Right ventricle myocardium inferior (tissue), 1 donor: ENCODE measurements at regions of chr9 and their contacts with region 1.

Region 1: GRCh38 chr9:20622330-20623020 is at the start of gene MLLT3:
- DNase-seq: peak; percentile 98
- ATAC-seq: peak; percentile 97
- total RNA-seq, gene MLLT3: 14.6 TPM

Region 2: GRCh38 chr9:19925817-19926503 is 696.5 kb before region 1 on chr9:
- intact Hi-C with region 1: loop called (anchors 5 kb)
- DNase-seq: no peak
- ATAC-seq: peak; percentile 93

Region 3: GRCh38 chr9:20479419-20480155 is 142.9 kb before region 1 on chr9:
- intact Hi-C with region 1: loop called (anchors 5 kb)
- DNase-seq: no peak
- ATAC-seq: no peak

Region 4: GRCh38 chr9:20683351-20684034 is 61.0 kb after region 1 on chr9:
- intact Hi-C with region 1: loop called (anchors 1 kb)
- DNase-seq: peak; percentile 78
- ATAC-seq: peak; percentile 47

Region 5: DNA sequence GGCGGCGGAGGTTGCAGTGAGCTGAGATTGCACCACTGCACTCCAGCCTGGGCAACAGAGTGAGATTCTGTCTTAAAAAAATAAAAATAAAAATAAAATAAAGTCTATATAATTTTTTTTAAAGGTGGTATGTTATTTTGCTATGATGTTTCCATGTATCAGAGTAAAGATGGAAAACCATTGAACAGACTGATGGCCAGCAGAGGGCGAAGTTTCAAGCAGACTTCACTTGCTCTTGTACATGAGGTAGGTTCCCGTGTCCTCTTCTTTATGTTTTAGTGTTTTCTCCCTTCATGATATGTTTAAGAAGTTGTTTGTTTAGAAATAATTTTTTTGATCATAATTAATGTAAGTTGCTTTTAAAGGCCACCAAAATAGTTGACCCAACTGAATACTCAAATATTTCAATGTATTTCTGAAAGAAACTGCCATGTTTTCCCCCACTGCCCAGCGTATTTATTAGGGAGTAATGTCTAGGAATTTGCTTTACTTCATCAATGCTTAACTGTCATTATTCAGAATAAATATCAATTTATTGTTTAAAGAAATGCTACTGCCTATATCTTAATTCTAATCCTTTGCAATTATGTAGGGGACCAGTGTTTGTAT is 262.6 kb after region 1 on chr9:
- intact Hi-C with region 1: loop called (anchors 5 kb)
- DNase-seq: no peak
- ATAC-seq: no peak

Region 6: GRCh38 chr9:21016701-21017491 is 394.4 kb after region 1 on chr9:
- intact Hi-C with region 1: no loop called
- DNase-seq: no peak
- ATAC-seq: no peak